ENCODE measurements at regions of chr17 and their contacts with region 1.

Region 1: DNA sequence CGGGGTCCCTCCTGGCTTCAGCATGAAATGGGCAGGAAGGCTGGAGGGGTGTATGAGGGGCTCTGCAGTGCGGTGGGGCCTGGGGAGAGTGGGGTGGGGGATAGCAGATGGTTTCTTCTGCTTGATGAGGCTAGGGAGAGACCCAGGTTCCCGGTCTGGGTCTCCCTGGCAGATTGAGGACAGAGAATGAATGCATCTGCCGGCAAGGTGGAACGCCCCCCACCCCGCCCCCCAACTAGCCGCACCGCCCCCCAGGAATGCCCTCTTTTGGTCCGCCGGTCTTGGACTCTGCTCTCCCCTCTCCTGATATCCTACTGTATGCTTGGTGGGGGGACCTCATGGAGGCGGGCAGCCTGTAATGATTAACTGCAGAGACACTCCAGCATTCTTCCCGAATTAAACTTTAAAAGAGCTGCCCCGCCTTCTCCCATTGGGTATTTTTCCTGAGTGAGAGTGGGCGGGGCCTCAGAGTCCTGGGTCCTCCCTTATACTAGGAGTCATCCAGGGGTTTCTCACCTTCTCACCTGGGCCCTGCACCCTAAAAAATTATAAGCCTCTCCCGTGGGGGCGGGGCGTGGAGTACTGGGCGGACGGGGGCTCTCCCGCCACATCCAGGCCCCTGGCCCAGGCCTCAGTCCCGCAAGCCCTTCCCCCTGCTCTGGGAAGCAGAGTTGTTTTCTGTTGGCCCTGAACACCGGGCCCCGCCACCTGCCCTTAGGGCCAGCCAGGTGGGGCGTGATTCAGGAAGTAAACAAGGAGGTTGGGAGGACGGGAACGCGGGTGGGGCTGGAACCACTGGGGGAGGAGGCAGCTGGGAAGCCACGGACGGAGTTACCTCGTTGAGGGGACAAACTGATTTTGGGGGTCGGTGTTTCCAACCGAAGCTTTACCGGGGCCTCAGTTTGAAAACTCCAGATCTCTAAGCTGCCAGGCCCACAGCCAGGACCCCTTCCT is 1.5 kb downstream of the GRB7 start:
- DNase-seq: peak; percentile 92 to 95
- H3K4me3 ChIP-seq: peak overlapping the region; percentile 73
- H3K4me3 Mint-ChIP-seq: peak overlapping the region; percentile 96
- H3K27ac Mint-ChIP-seq: peak overlapping the region; percentile 53
- H3K4me1 ChIP-seq: peaks cover 34% of the 10 kb centered on the region
- H3K4me1 Mint-ChIP-seq: peaks cover 22% of the 10 kb centered on the region
- H3K27me3 ChIP-seq: no peaks in the 10 kb centered on the region
- H3K27me3 Mint-ChIP-seq: no peaks in the 10 kb centered on the region
- CTCF ChIP-seq: no peak

Region 2: DNA sequence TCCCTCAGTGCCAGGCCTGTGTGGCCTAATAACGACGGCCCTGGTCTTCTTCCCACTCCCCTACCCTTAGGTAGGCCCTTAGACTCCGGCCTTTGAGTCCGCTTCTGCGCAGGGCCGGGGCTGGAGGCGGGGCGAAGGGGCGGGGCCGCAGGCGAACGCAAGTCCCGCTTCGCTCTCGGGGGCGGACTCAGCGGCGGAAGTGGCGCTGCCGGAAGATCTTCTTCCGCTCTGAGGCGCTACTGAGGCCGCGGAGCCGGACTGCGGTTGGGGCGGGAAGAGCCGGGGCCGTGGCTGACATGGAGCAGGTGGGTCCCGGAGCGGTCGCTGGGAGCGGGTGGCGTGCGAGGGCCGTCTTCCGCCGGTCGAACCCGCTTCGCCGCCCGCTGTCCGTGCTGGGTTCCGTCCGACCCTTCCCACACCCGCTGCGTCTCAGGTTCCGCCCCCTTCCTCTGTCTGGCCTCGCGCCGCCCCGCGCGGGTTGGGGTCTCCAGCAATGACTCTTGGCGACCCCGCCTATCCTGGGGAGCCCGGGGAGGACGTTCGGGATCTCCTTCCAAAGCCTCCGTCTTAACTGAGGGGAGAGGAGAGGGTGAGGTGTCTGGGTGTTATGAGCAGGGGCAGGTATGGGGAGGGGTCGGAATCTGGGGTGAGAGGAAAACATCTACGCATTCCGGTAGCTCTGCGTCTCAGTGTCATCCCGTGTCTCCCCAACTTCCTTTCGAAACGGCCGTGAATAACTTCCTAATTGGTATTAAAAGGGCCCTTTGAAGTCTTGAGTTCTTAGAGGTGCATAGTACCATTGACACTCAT is 102.1 kb before region 1 on chr17 and contains the start of gene STARD3:
- CTCF ChIA-PET with region 1: no interaction called
- POLR2A ChIA-PET with region 1: no interaction called
- intact Hi-C with region 1: loop called (anchors 5 kb)
- DNase-seq: peak; percentile 90 to 92
- H3K4me3 ChIP-seq: peak within 1 kb of the TSS; percentile 79
- H3K4me3 Mint-ChIP-seq: peak within 1 kb of the TSS; percentile 90
- H3K27ac Mint-ChIP-seq: peak within 1 kb of the TSS; percentile 58
- H3K4me1 ChIP-seq: peaks cover 5% of the 10 kb centered on the region
- H3K4me1 Mint-ChIP-seq: peaks cover 11% of the 10 kb centered on the region
- H3K27me3 ChIP-seq: no peaks in the 10 kb centered on the region
- H3K27me3 Mint-ChIP-seq: no peaks in the 10 kb centered on the region
- CTCF ChIP-seq: peak in 1 of 2 experiments; percentile 25
- total RNA-seq, gene STARD3: 42.6 and 55.5 TPM in 2 replicates